ENCODE measurements at regions of chr11 and their contacts with region 1.

Region 1: DNA sequence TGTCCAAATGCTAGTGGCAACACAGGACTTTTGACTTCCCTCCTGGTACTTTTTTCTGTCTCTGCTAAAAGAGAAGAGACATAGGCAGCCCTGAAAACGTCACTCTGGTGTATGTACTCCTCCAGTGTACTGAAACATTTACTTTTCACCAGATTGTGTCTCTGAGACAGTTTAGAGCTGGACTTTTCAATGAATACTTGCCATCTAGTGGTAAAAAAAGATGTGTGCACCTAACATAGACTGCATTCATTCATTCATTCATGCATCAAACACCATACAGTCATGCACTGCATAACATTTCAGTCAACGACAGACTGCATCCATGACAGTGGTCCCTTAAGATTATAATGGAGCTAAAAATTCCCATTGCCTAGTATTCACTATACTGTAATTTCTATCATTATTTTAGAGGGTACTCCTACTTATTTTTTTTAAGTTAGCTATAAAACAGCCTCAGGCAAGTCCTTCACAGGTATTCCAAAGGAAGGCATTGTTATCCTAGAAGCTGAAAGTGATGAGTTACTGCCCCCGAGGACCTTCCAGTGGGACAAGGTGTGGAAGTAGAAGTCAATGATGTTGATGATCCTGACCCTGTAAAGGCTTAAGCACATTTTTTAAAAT is 186.2 kb downstream of the SPON1 start:
- DNase-seq: peak; percentile 45
- H3K4me3 ChIP-seq: no peak overlapping the region
- H3K27ac ChIP-seq: no peak overlapping the region
- H3K4me1 ChIP-seq: no peaks in the 10 kb centered on the region
- H3K27me3 ChIP-seq: no peaks in the 10 kb centered on the region
- CTCF ChIP-seq: peak; percentile 73 to 83

Region 2: DNA sequence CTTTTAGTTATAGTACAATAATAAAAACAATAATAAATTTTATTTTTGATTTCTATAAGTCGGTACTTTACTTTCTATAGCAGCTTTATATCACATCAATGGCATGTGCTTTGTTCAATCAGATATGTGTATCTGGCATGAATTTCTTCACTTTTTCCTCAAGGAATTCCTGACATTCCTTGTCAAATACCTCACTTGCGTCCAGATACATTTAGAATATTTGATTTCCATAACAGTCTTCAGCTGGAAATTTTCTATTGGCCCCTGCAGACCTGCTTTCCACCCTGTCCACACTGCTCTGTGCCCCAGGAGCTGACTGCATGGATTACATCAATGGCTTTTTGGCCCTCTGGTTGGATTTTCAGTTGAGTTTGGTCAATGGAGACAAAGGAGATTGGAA is 387.1 kb before region 1 on chr11:
- CTCF ChIA-PET with region 1: no interaction called
- dilution Hi-C with region 1: no loop called
- in situ Hi-C with region 1: loop called in 1 of 2 experiments (anchors 10 kb)
- intact Hi-C with region 1: no loop called
- DNase-seq: no peak
- H3K4me3 ChIP-seq: no peak overlapping the region
- H3K27ac ChIP-seq: no peak overlapping the region
- H3K4me1 ChIP-seq: no peaks in the 10 kb centered on the region
- H3K27me3 ChIP-seq: no peaks in the 10 kb centered on the region
- CTCF ChIP-seq: no peak

Region 3: GRCh38 chr11:13868710-13869397 is 279.9 kb before region 1 on chr11:
- CTCF ChIA-PET with region 1: no interaction called
- dilution Hi-C with region 1: no loop called
- in situ Hi-C with region 1: no loop called
- intact Hi-C with region 1: loop called (anchors 2 kb)
- DNase-seq: peak; percentile 76
- H3K4me3 ChIP-seq: no peak overlapping the region
- H3K27ac ChIP-seq: no peak overlapping the region
- H3K4me1 ChIP-seq: peaks cover 19% of the 10 kb centered on the region
- H3K27me3 ChIP-seq: peaks cover 4% of the 10 kb centered on the region
- CTCF ChIP-seq: no peak

Region 4: GRCh38 chr11:13955971-13956421 is 192.8 kb before region 1 on chr11:
- CTCF ChIA-PET with region 1: no interaction called
- dilution Hi-C with region 1: no loop called
- in situ Hi-C with region 1: loop called (anchors 10 to 25 kb)
- intact Hi-C with region 1: loop called (anchors 1 kb)
- DNase-seq: no peak
- H3K4me3 ChIP-seq: no peak overlapping the region
- H3K27ac ChIP-seq: no peak overlapping the region
- H3K4me1 ChIP-seq: no peaks in the 10 kb centered on the region
- H3K27me3 ChIP-seq: peaks cover 4% of the 10 kb centered on the region
- CTCF ChIP-seq: peak; percentile 87 to 88

Region 5: DNA sequence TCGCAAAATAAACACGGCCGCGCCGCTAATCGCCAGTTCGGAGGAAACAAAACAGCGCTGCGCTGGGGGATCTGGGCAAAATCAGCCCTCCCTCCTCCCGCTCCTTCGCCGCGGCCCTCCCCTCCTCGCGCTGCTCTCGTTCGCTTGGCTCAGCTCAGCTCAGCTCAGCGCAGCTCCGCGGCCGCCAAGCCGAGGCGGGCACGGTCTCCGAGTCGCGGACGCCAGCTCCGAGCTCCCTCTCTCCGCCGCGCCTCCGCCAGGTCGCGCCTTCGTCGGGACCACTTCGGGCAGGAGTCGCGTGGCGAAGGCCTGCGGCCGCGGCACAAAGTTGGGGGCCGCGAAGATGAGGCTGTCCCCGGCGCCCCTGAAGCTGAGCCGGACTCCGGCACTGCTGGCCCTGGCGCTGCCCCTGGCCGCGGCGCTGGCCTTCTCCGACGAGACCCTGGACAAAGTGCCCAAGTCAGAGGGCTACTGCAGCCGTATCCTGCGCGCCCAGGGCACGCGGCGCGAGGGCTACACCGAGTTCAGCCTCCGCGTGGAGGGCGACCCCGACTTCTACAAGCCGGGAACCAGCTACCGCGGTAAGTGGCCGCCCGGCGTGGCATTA is 186.1 kb before region 1 on chr11 and contains the start of gene SPON1:
- CTCF ChIA-PET with region 1: interaction called, 4 read pairs
- dilution Hi-C with region 1: no loop called
- in situ Hi-C with region 1: loop called (anchors 10 to 25 kb)
- intact Hi-C with region 1: no loop called
- DNase-seq: peak; percentile 27
- H3K4me3 ChIP-seq: no peak within 1 kb of the TSS
- H3K27ac ChIP-seq: no peak within 1 kb of the TSS
- H3K4me1 ChIP-seq: peaks cover 10% of the 10 kb centered on the region
- H3K27me3 ChIP-seq: peaks cover 42% of the 10 kb centered on the region
- CTCF ChIP-seq: no peak
- total RNA-seq, gene SPON1: 0.17 TPM in 1 of 2 donors, not detected in the other

Region 6: DNA sequence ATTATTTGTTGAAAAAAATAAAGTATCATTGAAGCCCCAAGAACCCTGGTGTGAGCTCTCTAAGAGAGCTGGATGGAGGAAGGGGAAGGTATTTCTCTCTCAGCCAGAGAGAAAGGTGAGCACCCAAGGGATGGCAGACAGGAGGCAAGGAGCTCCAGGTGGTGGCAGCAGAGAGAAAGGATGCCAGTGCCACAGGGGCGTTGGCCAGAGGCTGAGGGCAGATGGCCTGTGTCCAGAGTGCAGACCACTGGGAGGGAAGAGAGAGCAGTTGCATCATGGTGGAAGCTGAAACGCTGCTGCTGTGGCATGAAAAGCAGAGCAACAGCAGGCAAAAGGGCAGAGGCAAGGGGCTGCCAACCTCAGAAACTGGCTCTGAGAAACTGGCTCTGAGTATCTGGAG is 177.8 kb before region 1 on chr11:
- CTCF ChIA-PET with region 1: interaction called, 4 read pairs
- dilution Hi-C with region 1: no loop called
- in situ Hi-C with region 1: loop called (anchors 10 to 25 kb)
- intact Hi-C with region 1: loop called (anchors 1 kb)
- DNase-seq: peak; percentile 23
- H3K4me3 ChIP-seq: no peak overlapping the region
- H3K27ac ChIP-seq: no peak overlapping the region
- H3K4me1 ChIP-seq: no peaks in the 10 kb centered on the region
- H3K27me3 ChIP-seq: peaks cover 8% of the 10 kb centered on the region
- CTCF ChIP-seq: peak; percentile 75 to 93

Region 7: DNA sequence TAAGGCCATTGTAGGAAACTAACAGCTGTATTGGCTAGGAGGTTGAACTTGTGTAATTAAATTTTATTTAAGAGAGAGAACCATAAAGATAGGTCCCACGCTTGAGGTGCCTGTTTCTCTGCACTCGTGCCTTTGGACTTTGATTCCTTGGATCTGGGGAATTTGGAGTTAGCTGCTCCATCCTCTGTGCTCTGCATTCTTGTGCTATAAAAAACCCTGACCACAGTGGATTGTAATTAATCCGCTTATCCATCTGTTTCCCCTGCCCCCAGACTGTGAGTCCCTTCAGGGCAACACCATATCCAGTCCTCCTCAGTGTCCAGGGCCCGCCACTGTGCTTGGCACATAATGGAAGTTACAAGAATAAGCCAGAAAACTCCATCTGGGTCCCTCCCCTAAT is 16.5 kb before region 1 on chr11:
- CTCF ChIA-PET with region 1: no interaction called
- dilution Hi-C with region 1: no loop called
- in situ Hi-C with region 1: no loop called
- intact Hi-C with region 1: no loop called
- DNase-seq: no peak
- H3K4me3 ChIP-seq: no peak overlapping the region
- H3K27ac ChIP-seq: no peak overlapping the region
- H3K4me1 ChIP-seq: no peaks in the 10 kb centered on the region
- H3K27me3 ChIP-seq: no peaks in the 10 kb centered on the region
- CTCF ChIP-seq: no peak

Region 8: DNA sequence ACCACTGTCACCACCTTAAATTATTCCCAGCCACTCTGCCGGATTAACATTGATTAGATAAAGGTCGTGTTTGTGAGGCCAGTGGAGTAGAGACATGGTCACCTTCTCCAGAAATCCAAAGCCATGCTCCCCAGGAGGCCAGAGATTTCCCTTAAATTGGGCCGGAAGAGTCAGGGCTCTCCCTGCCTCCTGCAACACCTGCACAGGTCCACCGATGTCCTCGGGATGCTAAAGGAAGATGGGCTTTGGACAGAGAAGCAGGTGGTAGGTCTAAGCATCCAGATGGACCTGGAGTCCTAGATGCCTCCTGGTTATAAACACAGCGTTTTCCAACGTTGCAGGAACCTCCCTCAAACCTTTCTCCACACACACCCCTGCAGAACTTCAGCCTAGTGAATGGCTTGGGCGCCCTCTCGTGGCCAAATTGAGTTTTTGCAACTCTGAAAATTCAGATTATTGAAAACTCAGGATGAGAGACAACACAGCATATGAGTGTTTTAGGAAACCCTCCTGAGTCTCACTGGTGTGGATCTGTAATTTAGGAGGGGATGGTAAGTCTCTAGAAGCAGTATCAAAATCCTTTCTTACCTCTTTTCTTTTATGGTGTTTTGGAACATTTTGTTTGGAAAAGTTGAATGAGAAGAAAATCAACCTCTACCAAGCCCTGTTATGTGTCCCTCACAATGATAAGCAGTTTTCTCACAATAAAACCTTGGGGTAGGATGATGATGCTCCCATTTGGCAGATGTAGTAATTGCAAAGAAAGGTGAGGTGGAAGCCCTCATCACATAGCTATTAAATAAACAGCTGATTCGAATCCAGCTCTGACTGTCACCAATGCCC is 100.6 kb after region 1 on chr11:
- CTCF ChIA-PET with region 1: interaction called, 4 read pairs
- dilution Hi-C with region 1: no loop called
- in situ Hi-C with region 1: no loop called
- intact Hi-C with region 1: loop called (anchors 2 kb)
- DNase-seq: peak; percentile 36
- H3K4me3 ChIP-seq: no peak overlapping the region
- H3K27ac ChIP-seq: no peak overlapping the region
- H3K4me1 ChIP-seq: no peaks in the 10 kb centered on the region
- H3K27me3 ChIP-seq: peaks cover 3% of the 10 kb centered on the region
- CTCF ChIP-seq: peak; percentile 70 to 85

Region 9: GRCh38 chr11:14435717-14436512 is 287.2 kb after region 1 on chr11:
- CTCF ChIA-PET with region 1: no interaction called
- dilution Hi-C with region 1: no loop called
- in situ Hi-C with region 1: no loop called
- intact Hi-C with region 1: no loop called
- DNase-seq: no peak
- H3K4me3 ChIP-seq: no peak overlapping the region
- H3K27ac ChIP-seq: no peak overlapping the region
- H3K4me1 ChIP-seq: no peaks in the 10 kb centered on the region
- H3K27me3 ChIP-seq: no peaks in the 10 kb centered on the region
- CTCF ChIP-seq: no peak

Measured in mammary epithelial cell (primary cell).